ENCODE measurements at regions of chr1 and their contacts with region 1.

Region 1: GRCh38 chr1:93000751-93001175 is 39.5 kb upstream of the DIPK1A start:
- DNase-seq: peak; percentile 8
- H3K4me3 ChIP-seq: no peak overlapping the region
- H3K27ac ChIP-seq: no peak overlapping the region
- H3K4me1 ChIP-seq: peaks cover 13% of the 10 kb centered on the region
- H3K27me3 ChIP-seq: peaks cover 3% of the 10 kb centered on the region
- CTCF ChIP-seq: no peak

Region 2: GRCh38 chr1:93042187-93043056 is 41.7 kb after region 1 on chr1:
- CTCF ChIA-PET with region 1: no interaction called
- dilution Hi-C with region 1: no loop called
- in situ Hi-C with region 1: no loop called
- intact Hi-C with region 1: loop called (anchors 1 kb)
- DNase-seq: no peak
- H3K4me3 ChIP-seq: no peak overlapping the region
- H3K27ac ChIP-seq: no peak overlapping the region
- H3K4me1 ChIP-seq: no peaks in the 10 kb centered on the region
- H3K27me3 ChIP-seq: no peaks in the 10 kb centered on the region
- CTCF ChIP-seq: no peak

Region 3: DNA sequence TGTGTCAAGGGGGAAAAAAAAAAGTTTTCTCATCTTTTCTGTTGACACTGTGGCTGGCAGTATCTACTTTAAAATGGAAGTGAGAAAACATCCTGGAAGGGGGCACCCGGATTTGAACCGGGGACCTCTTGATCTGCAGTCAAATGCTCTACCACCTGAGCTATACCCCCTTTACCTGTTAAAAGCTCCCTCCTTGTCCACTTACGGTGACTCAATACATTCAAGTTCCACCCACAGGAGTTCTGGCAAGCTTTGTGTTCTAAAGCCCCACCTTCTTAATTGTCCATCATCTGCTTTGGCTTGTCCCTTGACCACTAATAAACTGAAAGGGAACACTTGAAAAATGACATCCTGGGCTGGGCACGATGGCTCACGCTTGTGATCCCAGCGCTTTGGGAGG is 515.4 kb after region 1 on chr1:
- CTCF ChIA-PET with region 1: no interaction called
- dilution Hi-C with region 1: no loop called
- in situ Hi-C with region 1: no loop called
- intact Hi-C with region 1: no loop called
- DNase-seq: peak; percentile 32
- H3K4me3 ChIP-seq: no peak overlapping the region
- H3K27ac ChIP-seq: no peak overlapping the region
- H3K4me1 ChIP-seq: peaks cover 16% of the 10 kb centered on the region
- H3K27me3 ChIP-seq: no peaks in the 10 kb centered on the region
- CTCF ChIP-seq: no peak

Measured in mammary epithelial cell (primary cell).